A549 (cell line): ENCODE measurements at regions of chr2 and their contacts with region 1.

Region 1: DNA sequence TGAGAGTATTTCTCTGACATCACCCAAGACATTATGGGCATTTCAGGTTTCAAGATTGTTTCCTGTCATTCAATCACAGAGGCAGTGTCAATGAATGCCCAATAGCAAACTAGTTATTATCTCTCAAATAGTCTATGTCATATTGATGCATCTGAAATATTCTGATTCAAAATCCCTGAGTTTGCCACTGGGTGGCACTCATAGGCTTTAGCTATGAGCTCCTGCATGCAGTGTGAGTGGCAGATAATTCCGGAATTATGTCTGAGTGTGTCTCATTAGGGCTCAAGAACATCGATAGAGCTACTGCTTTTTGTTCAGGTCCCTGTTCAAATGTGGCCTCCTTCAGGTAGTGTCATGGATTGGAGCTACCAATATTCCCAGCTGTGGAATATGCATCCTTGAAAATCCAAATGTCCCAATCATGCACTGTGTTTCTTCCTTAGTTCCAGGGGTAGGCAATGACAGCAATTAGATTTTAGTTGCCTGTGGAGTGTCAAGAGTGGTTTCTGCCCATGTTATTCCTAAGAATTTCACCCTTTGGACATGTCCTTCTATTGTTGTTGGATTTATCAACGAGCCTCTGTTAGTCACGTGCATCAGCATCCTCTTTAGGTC is 7.8 kb upstream of the OR6B3 start:
- DNase-seq: peak; percentile 15 to 59
- ATAC-seq: peak; percentile 80 to 95
- H3K4me3 ChIP-seq: no peak overlapping the region
- H3K27ac ChIP-seq: no peak overlapping the region
- H3K4me1 ChIP-seq: no peaks in the 10 kb centered on the region
- CTCF ChIP-seq: peak; percentile 64
- EP300 ChIP-seq: no peak
- POLR2A ChIP-seq: no peak
- RAD21 ChIP-seq: peak; percentile 77 to 86

Region 2: GRCh38 chr2:240043279-240043989 is 17.6 kb before region 1 on chr2:
- CTCF ChIA-PET with region 1: interaction called, 12 read pairs
- POLR2A ChIA-PET with region 1: no interaction called
- DNase-seq: no peak
- ATAC-seq: no peak
- H3K4me3 ChIP-seq: no peak overlapping the region
- H3K27ac ChIP-seq: no peak overlapping the region
- H3K4me1 ChIP-seq: no peaks in the 10 kb centered on the region
- CTCF ChIP-seq: no peak
- EP300 ChIP-seq: no peak
- POLR2A ChIP-seq: no peak
- RAD21 ChIP-seq: no peak